Mammary epithelial cell (primary cell): ENCODE measurements at regions of chr5 and their contacts with region 1.

Region 1: DNA sequence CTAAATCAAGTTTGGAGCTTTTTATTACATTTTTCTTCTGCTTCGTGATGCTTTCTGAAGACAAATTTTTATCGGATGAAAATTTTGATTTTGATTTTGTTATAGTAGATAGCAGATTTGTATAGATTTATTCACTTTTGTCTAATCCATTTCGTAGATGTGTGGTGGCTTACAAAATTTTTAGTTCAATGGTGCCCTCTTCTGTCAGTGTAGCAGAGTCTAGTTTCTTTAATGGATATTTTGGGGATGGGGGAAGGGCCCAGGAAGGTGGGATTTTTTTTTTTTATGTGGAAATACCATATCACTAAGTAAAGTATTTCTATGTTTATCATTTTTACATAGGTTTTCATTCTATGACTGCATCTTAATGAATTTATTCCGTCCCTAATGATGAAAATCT is 259.9 kb upstream of the TARS1 start:
- DNase-seq: peak; percentile 24
- H3K4me3 ChIP-seq: no peak overlapping the region
- H3K27ac ChIP-seq: no peak overlapping the region
- H3K4me1 ChIP-seq: no peaks in the 10 kb centered on the region
- H3K27me3 ChIP-seq: no peaks in the 10 kb centered on the region
- CTCF ChIP-seq: peak in 1 of 2 donors; percentile 55

Region 2: GRCh38 chr5:32613050-32613672 is 567.7 kb before region 1 on chr5:
- CTCF ChIA-PET with region 1: no interaction called
- dilution Hi-C with region 1: no loop called
- in situ Hi-C with region 1: no loop called
- intact Hi-C with region 1: loop called (anchors 10 kb)
- DNase-seq: peak; percentile 51
- H3K4me3 ChIP-seq: no peak overlapping the region
- H3K27ac ChIP-seq: no peak overlapping the region
- H3K4me1 ChIP-seq: no peaks in the 10 kb centered on the region
- H3K27me3 ChIP-seq: no peaks in the 10 kb centered on the region
- CTCF ChIP-seq: peak; percentile 86 to 88

Region 3: DNA sequence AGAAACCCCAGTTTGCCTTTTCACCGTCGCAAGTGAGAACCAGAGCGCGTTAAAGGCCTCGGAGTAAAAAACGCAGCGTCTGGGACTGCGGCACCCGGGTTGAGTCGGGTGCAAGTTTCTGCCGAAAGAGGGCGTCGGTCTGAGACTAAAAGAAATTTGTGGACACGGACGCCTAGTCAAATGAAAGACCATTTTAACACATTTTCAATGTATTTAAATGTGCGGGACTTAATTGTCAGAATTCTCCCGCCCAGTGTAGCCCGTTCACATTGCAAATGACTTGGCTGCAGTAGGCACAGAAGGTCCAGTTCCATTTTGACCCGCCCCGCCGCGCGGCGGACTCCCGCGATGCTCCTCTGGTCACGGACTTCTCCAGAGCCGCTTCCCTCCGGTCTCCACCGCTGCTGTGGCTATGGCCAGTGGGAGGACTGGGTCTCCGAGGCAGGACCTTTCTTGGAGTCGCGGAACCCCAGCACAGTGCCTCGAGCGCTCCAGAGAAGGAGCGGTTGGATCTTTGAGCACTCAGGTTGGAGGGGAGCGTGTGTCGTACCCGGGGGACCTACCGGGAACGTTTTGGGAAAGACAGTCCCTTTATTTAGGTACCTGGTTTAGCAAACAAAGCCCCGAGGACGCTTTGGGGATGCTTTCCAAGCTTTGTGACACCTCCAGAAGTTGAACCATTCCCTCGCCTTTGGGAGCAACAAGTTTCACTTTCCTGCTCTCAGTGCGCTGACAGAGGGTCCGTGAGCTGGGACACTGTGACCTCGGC is 470.9 kb before region 1 on chr5:
- CTCF ChIA-PET with region 1: no interaction called
- dilution Hi-C with region 1: no loop called
- in situ Hi-C with region 1: loop called in 1 of 2 experiments (anchors 25 kb)
- intact Hi-C with region 1: loop called (anchors 1 kb)
- DNase-seq: peak; percentile 62
- H3K4me3 ChIP-seq: peak overlapping the region; percentile 38 to 54 (median 52)
- H3K27ac ChIP-seq: no peak overlapping the region
- H3K4me1 ChIP-seq: peaks cover 31% of the 10 kb centered on the region
- H3K27me3 ChIP-seq: peaks cover 27% of the 10 kb centered on the region
- CTCF ChIP-seq: peak; percentile 49 to 71

Region 4: DNA sequence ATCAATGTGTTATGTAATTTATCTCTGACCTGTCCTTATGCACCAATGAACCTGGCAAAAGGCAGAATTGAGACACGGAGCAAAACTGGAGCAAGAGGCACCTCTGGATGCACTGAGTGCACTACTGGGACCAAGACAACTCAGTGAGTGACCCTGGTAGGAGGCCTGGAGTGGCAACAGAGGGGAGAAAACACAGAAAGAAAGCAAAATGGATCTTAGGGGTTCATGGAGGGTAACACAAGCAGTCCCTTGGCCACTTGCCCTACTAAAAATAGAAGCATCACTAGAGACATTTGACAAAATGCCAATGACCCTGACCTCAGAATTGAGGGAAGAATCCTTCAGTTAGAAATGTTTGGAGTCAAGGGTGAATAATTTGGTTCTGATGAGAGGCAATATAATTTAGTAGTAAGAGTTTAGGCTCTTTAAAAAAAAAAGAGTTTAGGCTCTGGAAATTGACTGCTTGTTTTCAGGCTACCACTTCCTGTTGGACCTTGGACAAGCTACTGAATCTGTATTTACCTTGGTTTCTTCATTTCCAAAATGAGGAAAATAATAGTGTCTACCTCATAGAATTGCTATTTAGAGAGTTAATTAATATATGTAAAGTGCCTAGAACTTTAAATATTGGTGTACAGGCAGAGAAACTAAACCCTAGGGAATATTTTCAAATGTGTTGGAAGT is 25.0 kb after region 1 on chr5:
- CTCF ChIA-PET with region 1: no interaction called
- dilution Hi-C with region 1: no loop called
- in situ Hi-C with region 1: no loop called
- intact Hi-C with region 1: no loop called
- DNase-seq: no peak
- H3K4me3 ChIP-seq: no peak overlapping the region
- H3K27ac ChIP-seq: no peak overlapping the region
- H3K4me1 ChIP-seq: no peaks in the 10 kb centered on the region
- H3K27me3 ChIP-seq: no peaks in the 10 kb centered on the region
- CTCF ChIP-seq: no peak

Region 5: DNA sequence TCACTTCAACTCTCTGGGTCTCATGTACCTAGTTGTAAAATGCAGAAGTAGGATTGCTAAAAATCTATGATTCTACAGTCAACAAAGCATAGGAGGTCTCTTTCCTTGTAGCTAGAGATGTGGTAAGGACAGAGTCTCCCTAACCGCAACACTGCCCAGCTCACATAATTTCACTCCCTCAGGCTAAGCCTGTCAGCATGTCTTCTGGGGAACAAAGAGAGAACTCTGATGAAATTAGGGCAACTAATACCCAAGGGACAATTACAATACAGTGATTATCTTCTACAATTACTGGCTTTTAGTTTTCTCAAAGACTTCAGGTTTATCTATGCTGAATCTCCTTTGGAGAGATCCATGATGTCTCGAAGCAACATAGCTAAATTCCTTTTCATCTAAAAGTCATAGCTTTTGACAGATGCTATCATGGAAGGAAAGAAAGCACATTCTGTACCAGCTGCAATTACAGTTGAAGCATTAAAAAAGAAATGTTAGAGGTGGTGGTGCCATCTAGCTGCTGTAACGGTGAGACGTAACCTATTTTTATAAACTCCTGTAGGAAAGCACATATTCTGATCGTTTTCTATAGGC is 118.8 kb after region 1 on chr5:
- CTCF ChIA-PET with region 1: no interaction called
- dilution Hi-C with region 1: no loop called
- in situ Hi-C with region 1: no loop called
- intact Hi-C with region 1: loop called (anchors 1 kb)
- DNase-seq: peak; percentile 90
- H3K4me3 ChIP-seq: peak overlapping the region in 1 of 3 experiments; percentile 3
- H3K27ac ChIP-seq: peak overlapping the region; percentile 79
- H3K4me1 ChIP-seq: peaks cover 21% of the 10 kb centered on the region
- H3K27me3 ChIP-seq: no peaks in the 10 kb centered on the region
- CTCF ChIP-seq: peak; percentile 43 to 56

Region 6: DNA sequence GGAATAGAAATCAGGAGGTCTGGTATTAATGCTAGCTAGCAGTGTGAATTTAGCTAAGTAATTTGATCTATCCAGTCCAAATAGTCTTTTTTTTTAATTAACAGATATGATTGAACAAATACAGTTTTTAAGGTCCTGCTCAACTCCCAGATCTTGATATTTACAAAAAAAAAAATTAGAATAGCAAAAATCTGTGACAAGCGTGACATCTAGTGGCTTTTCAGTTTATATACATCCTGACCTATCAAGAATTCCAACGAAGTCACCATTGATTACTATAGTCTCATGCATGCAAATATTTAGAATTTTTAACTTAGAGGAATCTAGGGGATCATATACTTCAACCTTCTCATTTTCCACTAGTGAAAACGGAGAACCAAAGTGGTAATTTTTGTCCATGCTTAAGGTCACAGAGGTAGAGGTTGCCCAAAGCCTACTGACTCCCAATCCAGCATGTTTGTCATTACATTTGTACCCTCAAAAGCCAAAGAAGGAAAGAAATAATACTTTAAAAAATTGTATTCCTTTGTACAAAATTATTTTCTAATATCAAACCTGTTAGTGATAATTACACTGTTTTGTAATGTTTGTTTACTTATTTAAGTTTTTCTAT is 242.2 kb after region 1 on chr5:
- CTCF ChIA-PET with region 1: interaction called, 8 read pairs
- dilution Hi-C with region 1: no loop called
- in situ Hi-C with region 1: loop called in 1 of 2 experiments (anchors 25 kb)
- intact Hi-C with region 1: loop called (anchors 2 kb)
- DNase-seq: no peak
- H3K4me3 ChIP-seq: no peak overlapping the region
- H3K27ac ChIP-seq: no peak overlapping the region
- H3K4me1 ChIP-seq: no peaks in the 10 kb centered on the region
- H3K27me3 ChIP-seq: no peaks in the 10 kb centered on the region
- CTCF ChIP-seq: peak; percentile 27 to 51